ENCODE measurements at regions of chr11 and their contacts with region 1.

Region 1: GRCh38 chr11:1739576-1739975 is 10.8 kb downstream of the IFITM10 start:
- DNase-seq: no peak
- H3K4me3 ChIP-seq: no peak overlapping the region
- H3K27ac ChIP-seq: no peak overlapping the region
- H3K4me1 ChIP-seq: no peaks in the 10 kb centered on the region
- H3K27me3 ChIP-seq: no peaks in the 10 kb centered on the region
- CTCF ChIP-seq: no peak

Region 2: DNA sequence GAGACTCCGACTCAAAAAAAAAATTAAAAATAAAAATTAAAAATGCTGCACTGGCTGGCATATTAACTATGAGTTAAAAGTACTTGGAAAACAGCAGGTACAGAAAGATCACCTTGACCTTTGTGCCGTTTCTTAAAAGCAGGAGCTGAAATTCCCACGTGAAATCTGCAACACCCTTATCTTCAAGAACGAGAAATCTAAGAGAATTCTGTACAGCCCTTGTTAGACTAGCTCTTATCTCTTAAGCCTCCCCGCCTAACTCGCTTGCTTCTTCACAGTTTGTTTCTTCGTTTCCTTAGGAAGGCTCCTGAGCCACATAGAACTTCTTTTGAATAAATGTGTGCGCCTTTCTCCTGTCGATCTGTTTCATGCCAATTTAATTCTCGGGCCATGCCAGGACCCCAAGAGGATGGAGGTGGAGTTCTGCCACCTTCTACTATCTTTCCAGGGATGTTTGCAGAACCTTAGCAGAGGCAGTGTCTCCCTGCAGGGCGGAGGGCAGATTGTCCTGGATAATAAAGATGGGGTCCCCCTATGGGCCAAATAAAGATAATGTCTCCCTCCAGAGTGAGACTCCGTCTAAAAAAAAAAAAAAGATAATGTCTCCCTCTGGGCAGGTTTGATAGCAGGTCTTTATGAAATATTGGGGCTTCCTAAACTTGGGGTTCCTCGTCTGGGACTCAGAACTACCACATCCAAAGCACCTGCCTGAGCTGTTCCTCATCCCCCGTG is 67.9 kb after region 1 on chr11:
- intact Hi-C with region 1: loop called (anchors 10 kb)
- DNase-seq: no peak
- H3K4me3 ChIP-seq: no peak overlapping the region
- H3K27ac ChIP-seq: no peak overlapping the region
- H3K4me1 ChIP-seq: no peaks in the 10 kb centered on the region
- H3K27me3 ChIP-seq: no peaks in the 10 kb centered on the region
- CTCF ChIP-seq: no peak